ENCODE measurements at regions of chr17 and their contacts with region 1.

Region 1: GRCh38 chr17:27455914-27456680 is at the start of gene KSR1:
- DNase-seq: peak; percentile 69 to 88
- ATAC-seq: peak; percentile 86 to 90 (median 88)
- H3K4me3 ChIP-seq: peak within 1 kb of the TSS; percentile 66
- H3K4me3 Mint-ChIP-seq: peak within 1 kb of the TSS; percentile 98
- H3K27ac ChIP-seq: peak within 1 kb of the TSS; percentile 8
- H3K27ac Mint-ChIP-seq: peak within 1 kb of the TSS; percentile 62 to 82
- H3K4me1 ChIP-seq: peaks cover 31% of the 10 kb centered on the region
- H3K4me1 Mint-ChIP-seq: peaks cover 13 to 20% of the 10 kb centered on the region in 2 donors
- H3K27me3 ChIP-seq: no peaks in the 10 kb centered on the region
- H3K27me3 Mint-ChIP-seq: no peaks in the 10 kb centered on the region
- CTCF ChIP-seq: no peak
- total RNA-seq, gene KSR1: 46.4 to 63.1 (median 59.2) TPM

Region 2: GRCh38 chr17:27332485-27333409 is 123.3 kb before region 1 on chr17:
- intact Hi-C with region 1: loop called (anchors 2 kb)
- DNase-seq: peak; percentile 88 to 92
- ATAC-seq: peak; percentile 82 to 94 (median 86)
- H3K4me3 ChIP-seq: peak overlapping the region; percentile 74
- H3K4me3 Mint-ChIP-seq: peak overlapping the region; percentile 93
- H3K27ac ChIP-seq: peak overlapping the region; percentile 90
- H3K27ac Mint-ChIP-seq: peak overlapping the region; percentile 86 to 97
- H3K4me1 ChIP-seq: peaks cover 35% of the 10 kb centered on the region
- H3K4me1 Mint-ChIP-seq: peaks cover 23 to 29% of the 10 kb centered on the region in 2 donors
- H3K27me3 ChIP-seq: no peaks in the 10 kb centered on the region
- H3K27me3 Mint-ChIP-seq: no peaks in the 10 kb centered on the region
- CTCF ChIP-seq: peak; percentile 74

Region 3: GRCh38 chr17:27473748-27474609 is 17.9 kb after region 1 on chr17:
- intact Hi-C with region 1: loop called (anchors 1 kb)
- DNase-seq: peak; percentile 51 to 86
- ATAC-seq: peak; percentile 55 to 76 (median 74)
- H3K4me3 ChIP-seq: peak overlapping the region; percentile 3
- H3K4me3 Mint-ChIP-seq: peak overlapping the region; percentile 81
- H3K27ac ChIP-seq: peak overlapping the region; percentile 81
- H3K27ac Mint-ChIP-seq: peak overlapping the region; percentile 91 to 96
- H3K4me1 ChIP-seq: peaks cover 78% of the 10 kb centered on the region
- H3K4me1 Mint-ChIP-seq: peaks cover 69 to 72% of the 10 kb centered on the region in 2 donors
- H3K27me3 ChIP-seq: no peaks in the 10 kb centered on the region
- H3K27me3 Mint-ChIP-seq: no peaks in the 10 kb centered on the region
- CTCF ChIP-seq: no peak

Region 4: GRCh38 chr17:27578718-27579085 is 122.6 kb after region 1 on chr17:
- intact Hi-C with region 1: loop called (anchors 5 kb)
- DNase-seq: no peak
- ATAC-seq: peak in 1 of 3 donors; percentile 59
- H3K4me3 ChIP-seq: no peak overlapping the region
- H3K4me3 Mint-ChIP-seq: no peak overlapping the region
- H3K27ac ChIP-seq: no peak overlapping the region
- H3K27ac Mint-ChIP-seq: peak overlapping the region; percentile 14 to 25
- H3K4me1 ChIP-seq: peaks cover 25% of the 10 kb centered on the region
- H3K4me1 Mint-ChIP-seq: peaks cover 60 to 61% of the 10 kb centered on the region in 2 donors
- H3K27me3 ChIP-seq: no peaks in the 10 kb centered on the region
- H3K27me3 Mint-ChIP-seq: no peaks in the 10 kb centered on the region
- CTCF ChIP-seq: no peak

Region 5: GRCh38 chr17:27622986-27623385 is 166.9 kb after region 1 on chr17:
- intact Hi-C with region 1: no loop called
- DNase-seq: no peak
- ATAC-seq: no peak
- H3K4me3 ChIP-seq: no peak overlapping the region
- H3K4me3 Mint-ChIP-seq: no peak overlapping the region
- H3K27ac ChIP-seq: no peak overlapping the region
- H3K27ac Mint-ChIP-seq: no peak overlapping the region
- H3K4me1 ChIP-seq: no peaks in the 10 kb centered on the region
- H3K4me1 Mint-ChIP-seq: no peaks in the 10 kb centered on the region
- H3K27me3 ChIP-seq: no peaks in the 10 kb centered on the region
- H3K27me3 Mint-ChIP-seq: no peaks in the 10 kb centered on the region
- CTCF ChIP-seq: no peak